Esophagus muscularis mucosa (tissue), 4 donors: ENCODE measurements at regions of chr6 and their contacts with region 1.

Region 1: DNA sequence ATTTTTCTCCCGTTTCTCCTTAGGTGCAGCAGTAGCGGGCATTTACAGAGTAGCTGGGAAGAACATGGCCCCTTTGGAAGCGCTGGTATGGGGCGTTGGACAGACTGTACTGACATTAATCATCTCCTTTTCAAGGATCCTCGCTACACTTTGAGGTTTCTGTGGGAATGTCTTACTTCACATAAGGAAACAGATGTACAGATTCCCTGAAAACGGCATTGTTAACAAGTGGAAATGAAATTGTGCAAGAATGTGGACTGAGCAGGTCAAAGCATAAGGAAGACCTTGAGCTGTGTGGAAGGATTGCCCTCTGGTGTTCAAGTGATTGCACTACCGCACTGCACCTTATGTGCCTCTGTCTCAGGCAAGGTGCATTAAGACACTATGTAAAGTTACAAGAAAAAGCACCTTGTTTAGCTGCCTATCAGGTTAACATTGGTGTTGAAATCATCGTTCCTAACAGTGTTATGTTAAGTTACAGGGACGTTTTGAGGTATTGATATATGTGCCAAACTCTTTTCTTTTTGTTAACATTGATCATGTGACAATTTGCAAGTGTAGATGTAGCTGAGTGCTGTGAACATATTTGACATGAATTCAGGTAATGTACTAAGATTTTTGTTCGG is 38.0 kb downstream of the TMEM170B start:
- DNase-seq: no peak
- H3K4me3 ChIP-seq: peak overlapping the region in 1 of 4 donors; percentile 13
- H3K27ac ChIP-seq: no peak overlapping the region
- H3K4me1 ChIP-seq: peaks cover 0 to 4% (median 0%) of the 10 kb centered on the region in 4 donors
- H3K27me3 ChIP-seq: no peaks in the 10 kb centered on the region
- CTCF ChIP-seq: peak; percentile 79 to 92 (median 84)
- EP300 ChIP-seq: no peak
- POLR2A ChIP-seq: no peak

Region 2: GRCh38 chr6:11144393-11144851 is 431.1 kb before region 1 on chr6:
- intact Hi-C with region 1: loop called (anchors 2 kb)
- DNase-seq: no peak
- H3K4me3 ChIP-seq: no peak overlapping the region
- H3K27ac ChIP-seq: no peak overlapping the region
- H3K4me1 ChIP-seq: peaks cover 0 to 5% (median 4%) of the 10 kb centered on the region in 4 donors
- H3K27me3 ChIP-seq: no peaks in the 10 kb centered on the region
- CTCF ChIP-seq: peak; percentile 86 to 90 (median 89)
- EP300 ChIP-seq: no peak
- POLR2A ChIP-seq: no peak

Region 3: GRCh38 chr6:12001004-12001705 is 425.6 kb after region 1 on chr6:
- intact Hi-C with region 1: no loop called
- DNase-seq: no peak
- H3K4me3 ChIP-seq: no peak overlapping the region
- H3K27ac ChIP-seq: peak overlapping the region in 1 of 4 donors; percentile 19
- H3K4me1 ChIP-seq: peaks cover 0 to 15% (median 7%) of the 10 kb centered on the region in 4 donors
- H3K27me3 ChIP-seq: no peaks in the 10 kb centered on the region
- CTCF ChIP-seq: no peak
- EP300 ChIP-seq: no peak
- POLR2A ChIP-seq: no peak